ENCODE measurements at regions of chr2 and their contacts with region 1.

Region 1: DNA sequence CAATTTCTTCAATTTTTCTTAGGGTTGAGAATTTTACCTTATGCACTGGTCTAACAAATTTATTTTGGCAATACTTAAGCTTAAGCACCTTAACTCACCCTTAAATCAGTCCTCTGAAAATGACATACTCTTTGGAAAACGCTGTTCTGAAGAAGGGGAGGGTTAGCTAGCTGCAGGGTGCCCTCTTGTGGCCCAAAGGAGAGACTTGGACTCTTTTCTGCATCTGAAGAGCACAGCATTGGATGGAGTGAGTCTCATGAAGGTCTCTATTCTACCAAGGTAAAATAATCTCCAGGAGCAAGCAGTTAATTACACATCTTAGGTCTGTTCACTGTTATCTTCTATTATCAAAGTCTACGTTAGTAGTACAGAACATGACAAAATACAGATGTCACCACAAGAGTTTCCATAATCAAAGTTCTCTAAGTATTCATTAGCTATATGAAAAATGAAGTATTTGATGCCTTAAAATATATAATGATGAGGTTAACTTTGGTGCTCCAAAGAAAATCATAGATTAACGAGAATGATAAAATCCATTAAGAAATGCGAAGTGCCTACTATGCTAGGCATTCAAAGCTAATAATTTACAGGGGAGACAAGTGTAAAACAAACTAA is 24.4 kb downstream of the PUM2 start:
- DNase-seq: peak; percentile 71
- H3K4me3 Mint-ChIP-seq: no peak overlapping the region
- H3K27ac Mint-ChIP-seq: peak overlapping the region; percentile 39
- H3K4me1 Mint-ChIP-seq: peaks cover 8% of the 10 kb centered on the region
- H3K27me3 Mint-ChIP-seq: no peaks in the 10 kb centered on the region
- CTCF ChIP-seq: peak; percentile 78

Region 2: DNA sequence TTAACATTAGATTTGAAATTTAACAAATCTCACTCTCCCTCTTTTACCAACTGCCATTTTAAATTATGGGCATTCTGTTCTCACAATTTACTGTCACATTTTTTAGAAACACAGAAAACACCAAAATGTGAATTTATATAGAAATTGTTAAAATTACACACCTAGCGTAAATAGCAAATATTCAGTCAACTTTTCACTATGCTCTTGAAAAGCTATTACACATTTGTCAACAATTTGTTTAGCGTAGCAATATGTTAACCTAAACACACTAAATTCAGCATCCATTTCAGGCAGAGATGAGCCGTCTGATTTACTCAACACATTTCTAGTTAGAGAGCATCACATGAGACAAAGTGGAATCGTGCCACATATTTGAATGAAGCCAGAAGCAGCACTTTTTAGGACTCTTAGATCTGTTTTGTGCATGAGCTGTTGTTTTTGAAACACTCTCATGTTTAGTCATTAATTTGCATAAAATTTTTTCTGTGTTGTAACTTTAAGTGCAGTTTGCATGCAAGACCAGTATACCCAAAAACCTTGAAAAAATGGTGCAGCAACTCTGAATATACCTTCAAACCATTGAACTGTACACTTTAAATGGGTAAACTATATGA is 432.6 kb before region 1 on chr2:
- CTCF ChIA-PET with region 1: no interaction called
- POLR2A ChIA-PET with region 1: no interaction called
- intact Hi-C with region 1: no loop called
- DNase-seq: no peak
- H3K4me3 Mint-ChIP-seq: no peak overlapping the region
- H3K27ac Mint-ChIP-seq: peak overlapping the region; percentile 12
- H3K4me1 Mint-ChIP-seq: peaks cover 41% of the 10 kb centered on the region
- H3K27me3 Mint-ChIP-seq: no peaks in the 10 kb centered on the region
- CTCF ChIP-seq: no peak

Region 3: DNA sequence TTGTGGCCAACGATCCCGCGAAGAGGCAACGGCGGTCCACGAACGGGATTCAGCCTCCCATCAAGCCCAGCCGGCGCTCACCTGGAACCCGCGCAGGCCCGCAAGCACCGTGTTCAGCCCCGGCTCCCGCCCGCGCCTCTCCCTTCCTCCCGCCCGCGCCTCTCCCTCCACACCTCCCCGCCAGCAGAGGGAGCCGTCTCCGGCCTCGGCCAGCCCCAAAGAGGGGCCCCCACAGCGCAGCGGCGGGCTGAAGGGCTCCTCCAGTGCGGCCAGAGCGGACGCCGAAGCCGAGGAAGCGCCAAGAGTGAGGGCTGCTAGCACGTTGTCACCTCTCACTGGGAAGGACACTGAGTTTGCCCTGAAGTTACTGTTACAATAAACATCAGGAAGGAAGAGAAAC is 219.5 kb before region 1 on chr2:
- CTCF ChIA-PET with region 1: interaction called, 10 read pairs
- POLR2A ChIA-PET with region 1: interaction called, 3 read pairs
- intact Hi-C with region 1: loop called (anchors 1 kb)
- DNase-seq: peak; percentile 45
- H3K4me3 Mint-ChIP-seq: peak overlapping the region; percentile 68
- H3K27ac Mint-ChIP-seq: peak overlapping the region; percentile 40
- H3K4me1 Mint-ChIP-seq: peaks cover 17% of the 10 kb centered on the region
- H3K27me3 Mint-ChIP-seq: no peaks in the 10 kb centered on the region
- CTCF ChIP-seq: peak; percentile 40

Region 4: GRCh38 chr2:20291106-20291564 is 35.1 kb before region 1 on chr2:
- CTCF ChIA-PET with region 1: interaction called, 14 read pairs
- POLR2A ChIA-PET with region 1: interaction called, 5 read pairs
- intact Hi-C with region 1: no loop called
- DNase-seq: peak; percentile 88
- H3K4me3 Mint-ChIP-seq: no peak overlapping the region
- H3K27ac Mint-ChIP-seq: peak overlapping the region; percentile 9
- H3K4me1 Mint-ChIP-seq: peaks cover 6% of the 10 kb centered on the region
- H3K27me3 Mint-ChIP-seq: no peaks in the 10 kb centered on the region
- CTCF ChIP-seq: peak; percentile 64

Region 5: DNA sequence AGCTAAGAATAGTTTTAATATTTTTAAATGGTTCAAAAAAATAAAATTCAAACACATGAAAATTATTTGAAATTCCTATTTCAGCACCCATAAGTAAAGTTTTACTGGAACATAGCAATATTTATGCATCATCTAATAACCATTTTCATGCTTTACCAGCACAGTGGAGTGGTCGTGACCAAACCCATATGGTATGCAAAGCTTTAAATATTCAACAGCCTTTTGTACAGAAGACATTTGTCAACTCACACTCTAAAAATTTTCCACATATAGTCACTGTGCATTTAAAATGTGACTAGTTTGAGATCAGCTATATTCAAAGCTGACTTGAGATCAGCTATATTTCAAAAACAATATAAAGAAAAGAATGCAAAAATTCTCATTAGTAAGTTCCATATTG is 21.9 kb before region 1 on chr2:
- CTCF ChIA-PET with region 1: interaction called, 18 read pairs
- POLR2A ChIA-PET with region 1: interaction called, 4 read pairs
- intact Hi-C with region 1: no loop called
- DNase-seq: no peak
- H3K4me3 Mint-ChIP-seq: no peak overlapping the region
- H3K27ac Mint-ChIP-seq: no peak overlapping the region
- H3K4me1 Mint-ChIP-seq: peaks cover 12% of the 10 kb centered on the region
- H3K27me3 Mint-ChIP-seq: no peaks in the 10 kb centered on the region
- CTCF ChIP-seq: no peak

Region 6: GRCh38 chr2:20343128-20343527 is 16.9 kb after region 1 on chr2:
- CTCF ChIA-PET with region 1: interaction called, 18 read pairs
- POLR2A ChIA-PET with region 1: interaction called, 4 read pairs
- intact Hi-C with region 1: no loop called
- DNase-seq: peak; percentile 19
- H3K4me3 Mint-ChIP-seq: no peak overlapping the region
- H3K27ac Mint-ChIP-seq: no peak overlapping the region
- H3K4me1 Mint-ChIP-seq: peaks cover 29% of the 10 kb centered on the region
- H3K27me3 Mint-ChIP-seq: no peaks in the 10 kb centered on the region
- CTCF ChIP-seq: no peak

Region 7: GRCh38 chr2:20378792-20379519 is 52.7 kb after region 1 on chr2:
- CTCF ChIA-PET with region 1: interaction called, 26 read pairs
- POLR2A ChIA-PET with region 1: no interaction called
- intact Hi-C with region 1: no loop called
- DNase-seq: peak; percentile 83
- H3K4me3 Mint-ChIP-seq: no peak overlapping the region
- H3K27ac Mint-ChIP-seq: no peak overlapping the region
- H3K4me1 Mint-ChIP-seq: no peaks in the 10 kb centered on the region
- H3K27me3 Mint-ChIP-seq: no peaks in the 10 kb centered on the region
- CTCF ChIP-seq: peak; percentile 48

Region 8: GRCh38 chr2:20424300-20425290 is 98.3 kb after region 1 on chr2:
- CTCF ChIA-PET with region 1: interaction called, 30 read pairs
- POLR2A ChIA-PET with region 1: no interaction called
- intact Hi-C with region 1: no loop called
- DNase-seq: peak; percentile 61
- H3K4me3 Mint-ChIP-seq: no peak overlapping the region
- H3K27ac Mint-ChIP-seq: peak overlapping the region; percentile 67
- H3K4me1 Mint-ChIP-seq: peaks cover 47% of the 10 kb centered on the region
- H3K27me3 Mint-ChIP-seq: no peaks in the 10 kb centered on the region
- CTCF ChIP-seq: no peak

Measured in MCF 10A (cell line).